ENCODE measurements at regions of chr2 and their contacts with region 1.

Region 1: DNA sequence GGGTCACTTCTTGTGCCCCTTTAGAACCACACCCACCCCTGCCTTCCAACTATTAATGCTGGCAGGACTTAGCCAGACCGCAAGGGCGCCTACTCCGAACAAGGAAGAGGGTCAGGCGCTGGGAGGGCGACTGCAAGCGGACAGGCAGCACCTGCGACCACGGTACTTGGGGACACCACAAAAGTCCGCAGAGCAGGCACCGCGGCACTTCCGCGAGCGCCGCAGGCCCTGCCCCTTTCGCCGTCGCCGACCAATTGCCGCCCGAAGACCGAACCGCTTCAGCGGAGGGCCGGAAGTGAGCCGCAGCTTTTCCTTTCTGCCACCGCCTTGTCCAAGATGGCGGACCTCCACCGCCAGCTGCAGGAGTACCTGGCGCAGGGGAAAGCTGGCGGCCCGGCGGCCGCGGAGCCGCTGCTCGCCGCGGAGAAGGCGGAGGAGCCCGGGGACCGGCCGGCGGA is at the start of gene SFT2D3:
- DNase-seq: peak; percentile 82
- ATAC-seq: peak; percentile 83
- H3K4me3 ChIP-seq: peak within 1 kb of the TSS; percentile 59 to 72
- H3K27ac ChIP-seq: peak within 1 kb of the TSS; percentile 98
- H3K4me1 ChIP-seq: peaks cover 13 to 39% of the 10 kb centered on the region in 2 experiments
- H3K27me3 ChIP-seq: no peaks in the 10 kb centered on the region
- CTCF ChIP-seq: no peak
- POLR2A ChIP-seq: peak; percentile 92
- RAD21 ChIP-seq: no peak
- total RNA-seq, gene SFT2D3: 3.1 TPM

Region 2: GRCh38 chr2:127526149-127527000 is 174.8 kb before region 1 on chr2 and contains the start of gene IWS1:
- CTCF ChIA-PET with region 1: interaction called, 3 read pairs
- POLR2A ChIA-PET with region 1: no interaction called
- RAD21 ChIA-PET with region 1: no interaction called
- intact Hi-C with region 1: loop called (anchors 2 kb)
- DNase-seq: peak; percentile 93
- ATAC-seq: peak; percentile 91
- H3K4me3 ChIP-seq: peak within 1 kb of the TSS; percentile 92
- H3K27ac ChIP-seq: peak within 1 kb of the TSS; percentile 80
- H3K4me1 ChIP-seq: peaks cover 5 to 28% of the 10 kb centered on the region in 2 experiments; a peak in 3 of 4 replicates
- H3K27me3 ChIP-seq: no peaks in the 10 kb centered on the region
- CTCF ChIP-seq: peak in 1 of 3 experiments; percentile 16; a peak in 1 of 6 replicates
- POLR2A ChIP-seq: peak; percentile 48
- RAD21 ChIP-seq: no peak; the same call in 1 of the 2 replicates
- total RNA-seq, gene IWS1: 46.6 TPM

Measured in HCT116 (cell line).